ENCODE measurements at regions of chr1 and their contacts with region 1.

Region 1: GRCh38 chr1:198726455-198726854 is 87.6 kb downstream of the PTPRC start:
- DNase-seq: no peak
- ATAC-seq: no peak
- H3K4me3 ChIP-seq: no peak overlapping the region
- H3K4me3 Mint-ChIP-seq: peak overlapping the region in 1 of 10 donors; percentile 14
- H3K27ac ChIP-seq: no peak overlapping the region
- H3K27ac Mint-ChIP-seq: peak overlapping the region in 8 of 9 donors; percentile 59 to 89 (median 82)
- H3K4me1 ChIP-seq: peaks cover 28 to 32% of the 10 kb centered on the region in 2 donors
- H3K4me1 Mint-ChIP-seq: peaks cover 26 to 84% (median 69%) of the 10 kb centered on the region in 7 donors
- H3K27me3 ChIP-seq: no peaks in the 10 kb centered on the region
- H3K27me3 Mint-ChIP-seq: no peaks in the 10 kb centered on the region

Region 2: GRCh38 chr1:198693321-198693720 is 33.1 kb before region 1 on chr1:
- CTCF ChIA-PET with region 1: no interaction called
- POLR2A ChIA-PET with region 1: no interaction called
- intact Hi-C with region 1: loop called in 1 of 2 experiments (anchors 5 kb)
- DNase-seq: no peak
- ATAC-seq: no peak
- H3K4me3 ChIP-seq: no peak overlapping the region
- H3K4me3 Mint-ChIP-seq: peak overlapping the region; percentile 38 to 73 (median 58)
- H3K27ac ChIP-seq: peak overlapping the region; percentile 18
- H3K27ac Mint-ChIP-seq: peak overlapping the region; percentile 67 to 91 (median 77)
- H3K4me1 ChIP-seq: peaks cover 51 to 61% of the 10 kb centered on the region in 2 donors
- H3K4me1 Mint-ChIP-seq: peaks cover 50 to 94% (median 88%) of the 10 kb centered on the region in 7 donors
- H3K27me3 ChIP-seq: no peaks in the 10 kb centered on the region
- H3K27me3 Mint-ChIP-seq: no peaks in the 10 kb centered on the region

Region 3: DNA sequence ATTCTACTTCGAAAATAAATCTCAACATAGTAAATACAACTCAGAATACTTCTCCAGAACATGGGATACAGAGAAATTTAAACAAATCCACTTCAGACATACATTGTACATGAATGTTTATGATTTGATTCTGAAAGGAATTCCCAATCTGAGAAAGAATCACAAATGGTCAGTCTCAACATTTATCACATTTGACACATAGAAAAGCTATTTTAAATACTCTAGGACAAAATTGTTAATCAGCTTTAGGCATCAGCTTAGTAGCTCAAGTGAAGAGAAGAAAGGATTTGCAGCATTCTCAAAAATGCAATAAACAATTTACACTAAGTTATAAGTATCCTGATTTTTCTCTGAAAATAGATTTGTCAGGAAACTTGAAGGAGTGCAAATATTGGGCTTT is 97.2 kb after region 1 on chr1:
- CTCF ChIA-PET with region 1: no interaction called
- POLR2A ChIA-PET with region 1: no interaction called
- intact Hi-C with region 1: no loop called
- DNase-seq: no peak
- ATAC-seq: no peak
- H3K4me3 ChIP-seq: no peak overlapping the region
- H3K4me3 Mint-ChIP-seq: no peak overlapping the region
- H3K27ac ChIP-seq: no peak overlapping the region
- H3K27ac Mint-ChIP-seq: no peak overlapping the region
- H3K4me1 ChIP-seq: no peaks in the 10 kb centered on the region
- H3K4me1 Mint-ChIP-seq: no peaks in the 10 kb centered on the region
- H3K27me3 ChIP-seq: no peaks in the 10 kb centered on the region
- H3K27me3 Mint-ChIP-seq: peaks cover 0 to 4% (median 0%) of the 10 kb centered on the region in 5 donors

Region 4: DNA sequence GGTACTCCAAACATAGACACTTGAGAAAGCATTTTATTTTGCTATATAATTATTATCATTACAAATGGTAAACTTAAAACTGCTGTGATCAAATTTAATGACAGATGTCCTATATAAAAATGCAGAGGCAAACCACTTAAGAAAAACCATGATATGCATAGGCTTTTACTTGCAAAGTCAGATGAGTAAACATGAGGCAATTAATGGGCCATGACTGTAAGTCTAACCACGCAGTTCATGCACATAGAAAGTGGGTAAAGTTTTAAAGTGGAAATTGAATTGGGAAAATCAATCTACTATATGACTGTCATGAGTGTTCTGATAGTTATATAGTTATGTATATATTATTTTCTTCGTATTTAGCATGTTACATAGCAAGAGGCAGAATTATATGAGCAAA is 131.6 kb after region 1 on chr1:
- CTCF ChIA-PET with region 1: no interaction called
- POLR2A ChIA-PET with region 1: no interaction called
- intact Hi-C with region 1: no loop called
- DNase-seq: no peak
- ATAC-seq: no peak
- H3K4me3 ChIP-seq: no peak overlapping the region
- H3K4me3 Mint-ChIP-seq: no peak overlapping the region
- H3K27ac ChIP-seq: no peak overlapping the region
- H3K27ac Mint-ChIP-seq: no peak overlapping the region
- H3K4me1 ChIP-seq: no peaks in the 10 kb centered on the region
- H3K4me1 Mint-ChIP-seq: peaks cover 0 to 17% (median 0%) of the 10 kb centered on the region in 7 donors
- H3K27me3 ChIP-seq: no peaks in the 10 kb centered on the region
- H3K27me3 Mint-ChIP-seq: no peaks in the 10 kb centered on the region